Aorta (tissue), 5 donors: ENCODE measurements at regions of chr10 and their contacts with region 1.

Region 1: DNA sequence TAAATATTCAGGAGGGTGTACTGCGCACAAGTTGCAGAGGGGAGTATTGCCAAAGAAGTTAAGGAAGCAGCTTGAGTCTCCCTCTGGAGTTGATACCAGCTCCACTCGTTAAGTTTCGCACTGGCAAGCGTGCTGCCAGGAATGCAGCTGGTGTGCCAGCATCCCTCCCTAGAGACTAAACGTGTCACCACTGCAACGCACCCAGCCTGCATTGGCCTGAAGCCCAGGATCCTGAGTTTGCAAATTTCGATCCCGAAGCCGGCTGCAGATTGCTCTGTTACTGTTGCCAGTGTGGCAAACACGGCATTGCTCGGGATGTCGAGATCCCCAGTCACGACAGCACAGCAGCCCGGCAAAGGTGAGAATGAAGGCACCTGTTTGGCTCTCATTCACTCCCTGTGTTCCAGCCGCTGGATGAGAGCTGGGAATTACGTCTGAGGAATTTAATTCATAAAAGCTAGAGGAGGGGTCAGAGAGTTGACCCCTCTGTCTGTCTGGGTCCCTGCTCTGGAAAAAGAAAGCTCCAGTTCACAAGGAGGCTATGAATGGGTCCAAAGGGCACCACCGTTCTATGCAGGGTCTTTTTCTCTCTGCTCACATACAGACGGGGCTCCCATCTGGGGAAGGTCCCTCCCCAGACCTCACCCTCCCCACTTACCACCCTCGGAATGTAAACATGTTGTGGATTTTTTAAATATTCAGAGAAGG is 61.0 kb downstream of the NRP1 start:
- DNase-seq: peak; percentile 93 to 96
- ATAC-seq: peak; percentile 90
- H3K4me3 ChIP-seq: peak overlapping the region in 1 of 2 donors; percentile 34
- H3K27ac ChIP-seq: peak overlapping the region; percentile 77 to 78
- H3K4me1 ChIP-seq: peaks cover 2 to 9% of the 10 kb centered on the region in 2 donors
- H3K27me3 ChIP-seq: no peaks in the 10 kb centered on the region

Region 2: DNA sequence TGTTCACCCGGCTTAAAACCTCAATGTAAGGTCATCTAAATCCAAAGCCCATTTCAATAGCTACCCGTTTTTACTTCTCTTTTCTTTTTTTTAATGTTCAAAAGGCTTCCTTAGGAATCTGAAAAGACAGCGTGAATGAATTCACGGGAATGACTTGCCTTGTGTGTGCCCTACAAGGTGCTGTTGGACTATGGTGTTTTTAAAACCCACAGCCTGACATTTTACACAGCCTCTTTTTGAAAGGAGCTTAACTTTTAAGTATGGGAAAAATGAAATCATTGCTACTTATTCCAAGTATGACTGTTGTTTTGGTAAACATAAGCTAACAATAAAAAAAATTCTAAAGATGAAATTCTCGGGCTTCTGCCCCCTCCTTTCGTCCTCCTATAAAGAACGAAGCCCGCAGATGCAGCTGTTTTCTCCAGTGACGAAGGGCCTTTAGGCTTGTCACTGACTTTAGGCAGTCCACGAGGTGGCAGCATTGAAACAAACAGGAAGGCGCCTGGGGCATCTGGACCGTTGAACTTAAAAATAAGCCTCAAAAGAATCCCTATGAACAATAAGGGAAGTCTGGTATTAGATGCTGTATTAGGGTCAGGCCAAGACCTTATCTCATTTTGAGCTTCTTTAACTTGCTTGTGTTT is 80.3 kb before region 1 on chr10:
- intact Hi-C with region 1: loop called in 1 of 2 experiments (anchors 5 kb)
- DNase-seq: peak; percentile 87 to 89
- ATAC-seq: peak; percentile 88
- H3K4me3 ChIP-seq: no peak overlapping the region
- H3K27ac ChIP-seq: no peak overlapping the region
- H3K4me1 ChIP-seq: peaks cover 0 to 4% of the 10 kb centered on the region in 2 donors
- H3K27me3 ChIP-seq: no peaks in the 10 kb centered on the region

Region 3: DNA sequence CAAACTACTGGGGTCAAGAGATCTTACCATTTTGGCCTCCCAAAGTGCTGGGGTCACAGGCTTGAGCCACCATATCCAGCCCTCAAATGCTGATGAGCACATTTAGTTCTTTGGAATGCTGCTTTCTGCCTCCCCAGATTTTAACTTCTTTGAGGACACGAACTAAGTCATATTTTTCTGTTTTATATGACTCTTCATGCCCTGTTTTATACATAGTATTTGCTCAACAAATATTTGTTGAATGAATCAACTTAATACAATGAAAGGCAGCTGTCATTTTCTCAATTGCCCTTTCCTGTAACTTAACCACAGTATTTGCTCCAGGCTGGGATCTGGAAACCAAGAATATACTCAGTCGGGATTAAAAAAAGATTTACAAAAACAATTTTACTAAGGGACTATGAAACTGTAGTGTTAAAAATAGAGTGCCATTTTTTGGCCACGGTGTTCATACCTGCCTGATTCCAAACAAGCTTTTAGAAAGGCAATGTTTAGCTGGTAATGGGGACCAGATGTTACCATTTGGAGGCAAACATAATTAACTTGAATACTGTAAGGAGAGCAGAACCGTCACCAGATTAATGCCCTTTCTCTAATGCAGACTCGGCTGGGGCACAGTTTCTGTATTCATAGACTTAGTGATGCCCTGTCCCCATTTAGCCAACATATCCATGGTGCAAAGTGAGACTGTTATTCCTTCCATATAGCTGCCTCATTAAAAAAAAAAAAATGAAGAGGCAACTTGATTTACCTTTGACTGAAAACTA is 56.6 kb before region 1 on chr10:
- intact Hi-C with region 1: loop called (anchors 1 to 5 kb)
- DNase-seq: no peak
- ATAC-seq: no peak
- H3K4me3 ChIP-seq: no peak overlapping the region
- H3K27ac ChIP-seq: peak overlapping the region; percentile 37 to 62
- H3K4me1 ChIP-seq: no peaks in the 10 kb centered on the region
- H3K27me3 ChIP-seq: no peaks in the 10 kb centered on the region